HepG2 (cell line): ENCODE measurements at regions of chr9 and their contacts with region 1.

Region 1: DNA sequence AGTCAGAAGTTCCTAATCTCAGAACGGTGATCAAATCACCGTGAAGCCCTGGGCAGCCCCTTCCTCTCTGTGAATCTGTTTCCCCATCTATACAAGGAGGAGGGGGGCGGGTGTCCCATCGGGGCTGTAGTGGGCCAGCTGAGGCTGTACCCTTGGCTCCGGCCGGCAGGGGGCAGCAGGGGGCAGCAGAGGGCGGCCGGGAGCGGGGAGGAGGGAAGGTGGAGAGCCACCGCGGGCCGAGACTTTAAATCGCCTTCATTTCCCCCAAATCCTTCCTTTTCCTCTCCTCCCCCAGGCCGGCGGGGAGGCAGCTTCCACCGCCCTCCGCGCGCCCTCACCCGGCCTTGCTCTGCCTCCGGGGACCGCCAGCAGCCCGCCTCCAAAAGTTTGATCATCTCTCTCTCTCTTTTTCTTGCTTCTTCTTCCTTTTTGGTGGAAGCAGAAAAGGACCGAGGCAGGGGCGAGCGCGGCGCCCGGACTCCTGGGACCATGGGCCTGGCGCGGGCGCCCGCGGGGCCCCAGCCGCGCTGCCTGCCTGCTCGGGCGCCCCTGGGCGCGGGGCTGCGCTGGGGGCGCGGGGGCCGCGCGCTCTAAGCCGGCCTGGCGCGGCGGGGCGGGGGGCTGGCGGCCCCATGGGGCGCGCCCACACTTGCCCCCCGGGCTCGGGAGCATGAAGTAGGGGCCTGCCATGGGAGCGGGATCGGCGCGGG is at the start of gene COL27A1:
- DNase-seq: peak; percentile 70
- ATAC-seq: peak; percentile 68
- H3K4me3 ChIP-seq: peak within 1 kb of the TSS; percentile 78 to 100 (median 94)
- H3K27ac ChIP-seq: peak within 1 kb of the TSS; percentile 80
- H3K4me1 ChIP-seq: peaks cover 58% of the 10 kb centered on the region
- H3K27me3 ChIP-seq: peaks cover 0 to 4% of the 10 kb centered on the region in 2 experiments; a peak in 1 of 5 replicates
- CTCF ChIP-seq: peak; percentile 95
- EP300 ChIP-seq: no peak
- POLR2A ChIP-seq: no peak
- RAD21 ChIP-seq: peak; percentile 88
- total RNA-seq, gene COL27A1: 13.1 and 71.3 TPM in 2 replicates

Region 2: GRCh38 chr9:114108016-114108833 is 47.2 kb before region 1 on chr9:
- CTCF ChIA-PET with region 1: interaction called, 63 read pairs
- POLR2A ChIA-PET with region 1: interaction called, 75 read pairs
- in situ Hi-C with region 1: no loop called
- intact Hi-C with region 1: loop called (anchors 1 kb)
- DNase-seq: peak; percentile 80
- ATAC-seq: peak; percentile 98
- H3K4me3 ChIP-seq: peak overlapping the region; percentile 40 to 65 (median 40)
- H3K27ac ChIP-seq: no peak overlapping the region
- H3K4me1 ChIP-seq: peaks cover 51% of the 10 kb centered on the region
- H3K27me3 ChIP-seq: no peaks in the 10 kb centered on the region
- CTCF ChIP-seq: peak; percentile 99
- EP300 ChIP-seq: no peak
- POLR2A ChIP-seq: no peak
- RAD21 ChIP-seq: peak; percentile 100

Region 3: DNA sequence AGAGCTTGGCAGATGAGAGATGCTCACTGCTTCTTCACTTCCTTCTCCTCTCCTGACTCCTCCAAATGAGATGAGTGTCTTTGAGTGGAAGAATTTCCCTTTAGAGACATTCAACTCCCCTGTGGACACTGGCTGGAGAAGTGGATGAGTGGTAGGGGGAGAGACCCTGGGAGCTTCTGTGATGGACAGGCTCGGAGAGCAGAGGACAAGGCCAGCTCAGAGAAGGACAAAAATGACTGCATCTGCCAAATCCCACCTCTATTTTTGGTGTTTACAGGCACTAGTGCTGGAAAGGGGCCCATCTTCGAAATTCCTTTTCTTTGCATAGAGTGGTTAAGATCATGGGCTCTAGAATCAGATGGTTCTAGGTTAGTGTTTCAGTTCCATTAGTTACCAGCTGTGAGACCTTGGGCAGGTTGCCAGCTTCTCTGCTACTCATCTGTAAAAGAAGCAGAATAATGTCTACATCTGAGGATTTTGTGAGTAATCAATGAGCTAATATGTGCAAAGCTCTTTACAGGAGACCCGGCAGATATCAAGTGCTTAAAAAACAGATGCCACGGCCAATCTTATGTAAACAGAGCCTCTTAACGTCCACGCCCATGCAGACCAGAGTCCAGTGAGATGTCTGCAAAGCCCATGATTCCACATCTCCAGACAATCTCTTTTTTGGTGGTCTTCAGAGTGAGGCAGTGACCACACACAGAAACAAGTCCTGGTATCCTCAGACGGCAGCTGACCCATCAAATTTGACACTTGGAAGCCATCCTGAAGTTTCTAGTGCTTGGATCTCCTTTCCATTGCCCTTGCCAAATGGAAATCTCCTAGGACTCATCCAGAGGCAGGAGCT is 13.6 kb before region 1 on chr9:
- CTCF ChIA-PET with region 1: no interaction called
- POLR2A ChIA-PET with region 1: interaction called, 63 read pairs
- in situ Hi-C with region 1: no loop called
- intact Hi-C with region 1: no loop called
- DNase-seq: peak; percentile 82
- ATAC-seq: peak; percentile 64
- H3K4me3 ChIP-seq: peak overlapping the region in 1 of 3 experiments; percentile 39; a peak in 2 of 6 replicates
- H3K27ac ChIP-seq: peak overlapping the region; percentile 6
- H3K4me1 ChIP-seq: peaks cover 78% of the 10 kb centered on the region
- H3K27me3 ChIP-seq: no peaks in the 10 kb centered on the region; a peak in 1 of 5 replicates
- CTCF ChIP-seq: no peak
- EP300 ChIP-seq: peak in 1 of 2 experiments; percentile 74; a peak in 2 of 4 replicates
- POLR2A ChIP-seq: no peak
- RAD21 ChIP-seq: no peak

Region 4: DNA sequence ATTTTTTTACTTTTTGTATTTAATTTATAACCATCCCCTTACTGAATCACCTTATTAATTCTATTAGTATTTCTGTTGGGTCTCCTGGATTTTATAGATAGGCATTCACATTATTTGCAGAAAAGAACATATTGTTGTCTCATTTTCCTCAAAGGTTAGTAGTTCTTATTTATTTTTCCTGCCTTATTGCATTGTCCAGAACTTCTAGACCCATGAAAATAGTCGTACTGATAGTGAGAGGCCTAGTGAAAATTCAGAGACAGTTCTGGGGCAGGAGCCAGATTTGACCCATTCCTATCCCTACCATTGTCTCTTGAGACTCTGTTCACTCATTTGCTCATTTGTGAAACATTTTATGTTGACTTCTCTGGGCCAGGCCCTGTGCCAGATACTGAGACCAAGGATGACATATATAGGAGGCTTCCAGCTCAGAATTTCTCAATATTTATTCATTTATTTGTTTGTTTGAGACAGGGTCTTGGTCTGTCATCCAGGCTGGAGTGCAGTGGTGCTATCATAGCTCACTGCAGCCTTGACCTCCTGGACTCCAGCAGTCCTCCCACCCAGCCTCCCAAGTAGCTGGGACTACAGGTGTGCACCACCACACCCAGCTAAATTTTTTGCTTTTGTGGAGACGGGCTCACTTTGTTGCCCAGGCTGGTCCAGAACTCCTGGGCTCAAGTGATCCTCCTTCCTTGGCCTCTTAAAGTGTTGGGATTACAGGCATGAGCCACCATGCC is 34.6 kb after region 1 on chr9:
- CTCF ChIA-PET with region 1: no interaction called
- POLR2A ChIA-PET with region 1: no interaction called
- in situ Hi-C with region 1: no loop called
- intact Hi-C with region 1: loop called (anchors 5 kb)
- DNase-seq: no peak
- ATAC-seq: no peak
- H3K4me3 ChIP-seq: no peak overlapping the region
- H3K27ac ChIP-seq: no peak overlapping the region
- H3K4me1 ChIP-seq: no peaks in the 10 kb centered on the region
- H3K27me3 ChIP-seq: no peaks in the 10 kb centered on the region
- CTCF ChIP-seq: no peak
- EP300 ChIP-seq: no peak
- POLR2A ChIP-seq: no peak
- RAD21 ChIP-seq: no peak

Region 5: GRCh38 chr9:114291064-114291474 is 135.7 kb after region 1 on chr9:
- CTCF ChIA-PET with region 1: no interaction called
- POLR2A ChIA-PET with region 1: interaction called, 5 read pairs
- in situ Hi-C with region 1: loop called (anchors 5 kb)
- intact Hi-C with region 1: loop called (anchors 5 kb)
- DNase-seq: peak; percentile 61
- ATAC-seq: peak; percentile 64
- H3K4me3 ChIP-seq: no peak overlapping the region
- H3K27ac ChIP-seq: no peak overlapping the region
- H3K4me1 ChIP-seq: no peaks in the 10 kb centered on the region
- H3K27me3 ChIP-seq: no peaks in the 10 kb centered on the region
- CTCF ChIP-seq: peak; percentile 88
- EP300 ChIP-seq: no peak
- POLR2A ChIP-seq: no peak
- RAD21 ChIP-seq: peak; percentile 77